PC-3 (cell line): ENCODE measurements at regions of chr4 and their contacts with region 1.

Region 1: DNA sequence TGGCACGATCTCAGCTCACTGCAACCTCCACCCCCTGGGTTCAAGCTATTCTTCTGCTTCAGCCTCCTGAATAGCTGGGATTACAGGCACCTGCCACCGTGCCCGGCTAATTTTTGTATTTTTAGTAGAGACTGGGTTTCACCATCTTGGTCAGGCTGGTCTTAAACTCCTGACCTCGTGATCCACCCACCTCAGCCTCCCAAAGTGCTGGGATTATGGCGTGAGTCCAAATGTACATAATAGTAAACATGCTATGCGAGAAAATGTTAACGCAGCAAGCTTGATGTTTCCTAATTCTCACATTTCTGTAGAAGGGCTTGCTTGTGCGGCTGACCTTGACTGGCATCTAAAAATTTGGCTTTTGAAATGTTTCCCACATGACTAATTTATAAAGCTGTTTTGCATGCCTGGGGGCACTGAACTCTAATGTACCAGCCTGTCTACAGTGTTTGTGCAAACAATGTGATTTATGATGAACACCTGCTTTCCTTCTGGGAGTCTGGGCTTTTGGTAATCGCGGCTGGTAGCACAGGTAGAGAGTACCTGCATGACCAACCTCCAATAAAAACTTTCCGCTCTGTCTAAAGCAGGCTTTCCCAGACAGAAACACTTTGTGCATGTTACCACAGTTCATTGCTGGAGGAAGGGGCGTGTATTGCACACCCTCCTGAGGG is 216.8 kb downstream of the IL15 start:
- DNase-seq: peak; percentile 98
- ATAC-seq: peak; percentile 96
- H3K4me3 ChIP-seq: peak overlapping the region; percentile 22; the same call in 1 of the 2 replicates
- H3K27ac ChIP-seq: peak overlapping the region; percentile 91
- H3K4me1 ChIP-seq: peaks cover 39% of the 10 kb centered on the region
- H3K27me3 ChIP-seq: no peaks in the 10 kb centered on the region
- CTCF ChIP-seq: no peak

Region 2: DNA sequence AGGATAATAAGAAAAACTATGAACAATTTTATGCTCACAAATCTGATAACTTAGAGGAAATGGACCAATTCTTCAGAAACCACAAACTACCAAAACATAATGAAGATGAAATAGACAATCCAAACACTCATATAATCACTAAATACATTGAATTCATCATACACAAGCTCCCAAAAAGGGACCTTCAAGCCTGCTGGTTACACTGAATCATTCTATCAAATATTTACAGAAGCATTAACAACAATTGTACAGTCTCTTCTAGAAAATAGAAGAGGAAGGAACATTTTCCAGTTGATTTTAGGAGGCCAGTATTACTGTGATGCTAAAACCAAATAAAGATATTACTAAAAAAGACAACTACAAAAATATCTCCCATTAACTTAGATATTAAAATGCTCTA is 128.6 kb before region 1 on chr4:
- CTCF ChIA-PET with region 1: no interaction called
- POLR2A ChIA-PET with region 1: no interaction called
- intact Hi-C with region 1: loop called (anchors 10 kb)
- DNase-seq: peak; percentile 72
- ATAC-seq: peak; percentile 97
- H3K4me3 ChIP-seq: no peak overlapping the region
- H3K27ac ChIP-seq: no peak overlapping the region
- H3K4me1 ChIP-seq: peaks cover 16% of the 10 kb centered on the region
- H3K27me3 ChIP-seq: no peaks in the 10 kb centered on the region
- CTCF ChIP-seq: no peak

Region 3: DNA sequence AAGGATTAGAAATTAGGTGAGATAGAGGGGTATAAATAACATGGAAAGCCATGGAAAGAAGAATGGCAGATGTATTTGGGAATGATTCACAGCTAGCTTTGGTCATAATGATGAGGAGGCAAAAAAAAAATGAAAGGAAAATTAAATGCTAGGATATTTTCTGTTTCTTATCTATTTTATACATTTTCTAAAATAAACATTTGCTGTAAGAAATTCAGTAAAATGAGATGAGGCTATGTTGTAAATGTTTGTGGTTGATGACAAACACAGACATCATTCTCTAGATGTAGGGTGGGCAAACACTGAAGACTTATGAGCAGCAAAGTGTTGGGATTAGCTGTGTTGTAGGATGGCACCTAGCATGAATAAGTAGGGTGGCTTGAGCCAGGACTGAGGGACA is 190.3 kb after region 1 on chr4:
- CTCF ChIA-PET with region 1: no interaction called
- POLR2A ChIA-PET with region 1: no interaction called
- intact Hi-C with region 1: no loop called
- DNase-seq: peak; percentile 89
- ATAC-seq: peak; percentile 96
- H3K4me3 ChIP-seq: no peak overlapping the region
- H3K27ac ChIP-seq: peak overlapping the region; percentile 48
- H3K4me1 ChIP-seq: peaks cover 41% of the 10 kb centered on the region
- H3K27me3 ChIP-seq: no peaks in the 10 kb centered on the region
- CTCF ChIP-seq: no peak